ENCODE measurements at regions of chr2 and their contacts with region 1.

Region 1: GRCh38 chr2:44479122-44479887 is 117.6 kb downstream of the CAMKMT start:
- DNase-seq: peak; percentile 39
- ATAC-seq: peak; percentile 100
- H3K4me3 Mint-ChIP-seq: no peak overlapping the region
- H3K27ac Mint-ChIP-seq: no peak overlapping the region
- H3K4me1 Mint-ChIP-seq: peaks cover 9% of the 10 kb centered on the region
- H3K27me3 Mint-ChIP-seq: no peaks in the 10 kb centered on the region

Region 2: DNA sequence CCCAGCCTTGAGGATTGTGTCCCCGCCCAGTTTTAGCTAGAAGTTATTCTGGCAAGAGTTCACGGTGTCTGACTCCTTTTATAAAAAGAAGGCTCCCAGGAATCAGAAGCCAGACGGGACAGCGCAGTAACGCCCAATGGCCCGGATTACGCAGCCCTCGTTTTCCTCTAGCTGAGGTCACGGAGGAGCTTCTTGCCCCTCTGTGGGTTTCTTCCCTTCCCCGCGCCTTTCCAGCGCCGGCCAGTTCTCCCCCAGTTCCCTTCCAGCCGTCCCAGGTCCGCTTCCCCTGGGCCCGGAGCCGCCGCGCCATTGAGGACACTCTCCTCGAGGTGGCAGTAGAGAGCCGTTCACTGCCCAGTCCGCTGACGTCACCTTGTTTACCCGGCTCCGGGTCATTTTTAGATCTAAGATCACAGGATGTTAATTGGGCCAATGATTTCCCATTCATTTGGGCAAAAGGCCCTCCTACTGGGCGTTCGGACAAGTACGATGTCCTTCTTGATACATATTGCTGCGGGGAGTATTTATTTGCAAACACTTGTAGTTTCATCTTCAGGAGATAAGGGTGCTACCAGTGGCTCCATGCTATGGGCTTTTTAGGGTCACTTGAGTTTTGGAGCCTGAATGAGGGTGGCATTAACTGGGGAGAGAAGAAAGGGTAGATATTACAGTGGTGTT is 392.1 kb before region 1 on chr2:
- CTCF ChIA-PET with region 1: interaction called, 7 read pairs
- POLR2A ChIA-PET with region 1: no interaction called
- intact Hi-C with region 1: loop called (anchors 1 to 2 kb)
- DNase-seq: peak; percentile 91
- ATAC-seq: peak; percentile 90
- H3K4me3 Mint-ChIP-seq: peak overlapping the region; percentile 67
- H3K27ac Mint-ChIP-seq: peak overlapping the region; percentile 93
- H3K4me1 Mint-ChIP-seq: peaks cover 22% of the 10 kb centered on the region
- H3K27me3 Mint-ChIP-seq: no peaks in the 10 kb centered on the region

Region 3: DNA sequence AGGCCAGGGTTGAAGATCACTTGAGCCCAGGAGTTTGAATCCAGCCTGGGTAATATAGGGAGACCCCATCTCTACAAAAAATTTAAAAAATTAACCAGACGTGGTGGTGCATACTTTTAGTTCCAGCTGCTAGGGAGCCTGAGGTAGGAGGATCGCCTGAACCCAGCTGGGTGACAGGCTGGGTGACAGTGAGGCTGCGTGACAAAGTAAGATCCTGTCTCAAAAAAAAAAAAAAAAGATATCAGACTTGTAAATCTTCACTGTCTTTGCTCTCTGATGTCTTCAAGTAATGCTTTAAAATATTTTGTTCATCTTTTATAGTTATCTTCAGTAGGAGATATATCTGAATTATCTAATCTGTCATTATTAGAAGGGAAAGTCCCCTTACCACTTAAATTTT is 107.1 kb before region 1 on chr2:
- CTCF ChIA-PET with region 1: no interaction called
- POLR2A ChIA-PET with region 1: no interaction called
- intact Hi-C with region 1: no loop called
- DNase-seq: no peak
- ATAC-seq: no peak
- H3K4me3 Mint-ChIP-seq: no peak overlapping the region
- H3K27ac Mint-ChIP-seq: no peak overlapping the region
- H3K4me1 Mint-ChIP-seq: peaks cover 26% of the 10 kb centered on the region
- H3K27me3 Mint-ChIP-seq: no peaks in the 10 kb centered on the region

Region 4: DNA sequence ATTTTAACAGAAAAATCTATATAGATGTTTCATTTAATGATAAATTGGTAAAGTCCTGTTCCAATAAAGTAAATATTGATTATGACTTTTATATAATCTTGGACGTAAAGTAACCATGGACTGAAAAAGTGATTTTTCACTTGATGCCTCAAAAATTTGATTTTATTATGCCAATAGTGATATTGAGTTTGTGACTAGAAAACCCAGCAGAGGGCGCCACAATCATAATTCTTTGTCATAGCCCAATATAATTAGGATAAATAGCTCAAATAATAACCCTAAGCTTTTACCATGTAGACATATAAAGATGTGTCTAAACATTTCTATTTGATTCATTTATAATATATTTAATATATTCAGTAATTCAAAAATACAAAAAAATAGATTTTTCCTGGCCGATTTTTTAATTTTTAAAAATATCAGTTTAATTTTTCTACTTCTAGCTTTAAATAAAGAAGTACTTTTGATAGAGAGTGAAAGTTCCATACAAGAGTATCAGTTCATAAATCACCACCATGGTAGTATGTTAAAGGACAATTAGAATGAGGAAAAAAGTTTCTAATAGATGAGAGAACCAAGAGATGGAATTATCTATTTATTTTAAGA is 86.9 kb before region 1 on chr2:
- CTCF ChIA-PET with region 1: interaction called, 5 read pairs
- POLR2A ChIA-PET with region 1: no interaction called
- intact Hi-C with region 1: loop called in 1 of 2 experiments (anchors 5 kb)
- DNase-seq: peak; percentile 69
- ATAC-seq: no peak
- H3K4me3 Mint-ChIP-seq: no peak overlapping the region
- H3K27ac Mint-ChIP-seq: no peak overlapping the region
- H3K4me1 Mint-ChIP-seq: peaks cover 3% of the 10 kb centered on the region
- H3K27me3 Mint-ChIP-seq: no peaks in the 10 kb centered on the region

Region 5: GRCh38 chr2:44462934-44463849 is 16.1 kb before region 1 on chr2:
- CTCF ChIA-PET with region 1: interaction called, 39 read pairs
- POLR2A ChIA-PET with region 1: no interaction called
- intact Hi-C with region 1: no loop called
- DNase-seq: no peak
- ATAC-seq: no peak
- H3K4me3 Mint-ChIP-seq: no peak overlapping the region
- H3K27ac Mint-ChIP-seq: no peak overlapping the region
- H3K4me1 Mint-ChIP-seq: no peaks in the 10 kb centered on the region
- H3K27me3 Mint-ChIP-seq: no peaks in the 10 kb centered on the region

Region 6: GRCh38 chr2:44498551-44498950 is 19.2 kb after region 1 on chr2:
- CTCF ChIA-PET with region 1: interaction called, 13 read pairs
- POLR2A ChIA-PET with region 1: no interaction called
- intact Hi-C with region 1: no loop called
- DNase-seq: no peak
- ATAC-seq: no peak
- H3K4me3 Mint-ChIP-seq: no peak overlapping the region
- H3K27ac Mint-ChIP-seq: no peak overlapping the region
- H3K4me1 Mint-ChIP-seq: no peaks in the 10 kb centered on the region
- H3K27me3 Mint-ChIP-seq: no peaks in the 10 kb centered on the region

Region 7: DNA sequence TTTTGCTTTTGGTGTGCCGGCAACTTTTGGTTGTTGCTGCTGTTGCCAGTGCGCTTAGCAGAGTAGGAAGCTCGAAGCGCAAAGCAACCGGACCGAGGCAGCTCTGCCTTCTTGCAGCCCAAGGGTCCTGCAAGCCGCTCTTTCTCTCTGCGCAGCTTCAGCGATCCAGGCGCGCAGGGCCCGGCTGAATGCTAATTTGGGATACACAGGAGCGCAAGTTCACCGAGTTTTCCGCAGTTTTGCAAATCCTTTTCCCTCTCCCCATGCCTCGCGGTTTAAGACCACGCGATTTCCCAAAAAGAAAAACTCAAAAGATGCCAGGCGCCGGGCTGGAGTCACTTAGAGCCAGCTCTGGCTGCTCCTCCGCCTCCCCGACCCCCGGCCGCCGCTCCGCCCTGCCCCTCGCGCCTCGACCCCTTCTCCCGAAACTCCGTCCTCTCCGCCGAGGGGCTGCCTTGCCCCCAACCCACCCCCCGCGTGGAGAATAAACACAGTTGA is 448.7 kb after region 1 on chr2:
- CTCF ChIA-PET with region 1: interaction called, 17 read pairs
- POLR2A ChIA-PET with region 1: no interaction called
- intact Hi-C with region 1: no loop called
- DNase-seq: no peak
- ATAC-seq: no peak
- H3K4me3 Mint-ChIP-seq: no peak overlapping the region
- H3K27ac Mint-ChIP-seq: no peak overlapping the region
- H3K4me1 Mint-ChIP-seq: peaks cover 17% of the 10 kb centered on the region
- H3K27me3 Mint-ChIP-seq: peaks cover 72% of the 10 kb centered on the region